ENCODE measurements at regions of chr17 and their contacts with region 1.

Region 1: DNA sequence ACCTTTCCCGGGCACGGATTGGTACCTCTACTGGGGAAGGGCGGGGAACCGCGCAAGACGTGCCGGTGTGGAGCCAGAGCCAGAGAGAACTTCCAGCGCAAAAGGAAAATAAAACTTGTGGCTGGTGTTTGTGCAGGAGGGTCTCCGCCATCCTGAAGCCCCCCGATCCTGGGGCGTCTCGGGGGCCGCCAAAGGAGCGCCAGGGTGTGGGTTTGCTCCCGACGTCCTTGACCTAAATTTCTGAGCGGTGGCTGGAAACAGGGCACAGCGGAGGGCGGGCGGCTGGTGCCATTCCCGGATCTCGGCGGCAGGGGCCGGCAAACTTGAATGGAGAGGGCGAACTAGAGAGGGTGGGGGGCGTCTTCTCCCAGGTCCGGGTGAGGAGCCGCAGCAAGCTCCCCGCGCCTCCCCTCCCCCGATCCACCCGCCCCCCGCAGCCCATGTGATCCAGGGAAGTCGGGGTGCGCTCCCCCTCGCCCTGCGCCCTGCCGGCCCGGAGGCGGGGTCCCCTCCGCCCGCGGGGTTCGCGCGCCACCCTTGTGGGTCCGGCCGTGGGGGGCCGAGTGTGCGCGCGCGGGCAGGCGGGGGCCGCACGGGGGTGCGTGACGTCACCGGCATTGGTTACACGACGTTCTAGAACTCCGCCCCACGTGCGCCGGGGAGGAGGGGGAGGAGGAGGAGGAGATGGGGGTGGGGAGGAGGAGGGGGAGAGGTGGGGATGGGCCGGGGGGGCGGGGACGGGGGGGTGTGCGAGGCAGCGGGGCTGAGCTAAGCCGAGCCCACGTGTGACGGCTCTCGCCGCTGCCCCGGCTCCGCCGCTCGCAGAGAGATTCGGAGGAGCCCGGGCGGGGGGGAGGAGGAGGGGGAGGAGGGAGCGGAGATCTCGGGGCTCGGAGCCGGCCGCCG is at the start of gene MSI2:
- DNase-seq: peak; percentile 99
- H3K4me3 ChIP-seq: peak within 1 kb of the TSS; percentile 90 to 98 (median 94)
- H3K27ac ChIP-seq: peak within 1 kb of the TSS; percentile 95 to 99 (median 97)
- H3K4me1 ChIP-seq: peaks cover 0 to 34% (median 19%) of the 10 kb centered on the region in 4 donors
- H3K27me3 ChIP-seq: no peaks in the 10 kb centered on the region
- CTCF ChIP-seq: no peak
- EP300 ChIP-seq: peak; percentile 31 to 86 (median 82)
- POLR2A ChIP-seq: peak in 1 of 2 donors; percentile 22
- total RNA-seq, gene MSI2: 19.5 to 25.8 (median 20.8) TPM

Region 2: DNA sequence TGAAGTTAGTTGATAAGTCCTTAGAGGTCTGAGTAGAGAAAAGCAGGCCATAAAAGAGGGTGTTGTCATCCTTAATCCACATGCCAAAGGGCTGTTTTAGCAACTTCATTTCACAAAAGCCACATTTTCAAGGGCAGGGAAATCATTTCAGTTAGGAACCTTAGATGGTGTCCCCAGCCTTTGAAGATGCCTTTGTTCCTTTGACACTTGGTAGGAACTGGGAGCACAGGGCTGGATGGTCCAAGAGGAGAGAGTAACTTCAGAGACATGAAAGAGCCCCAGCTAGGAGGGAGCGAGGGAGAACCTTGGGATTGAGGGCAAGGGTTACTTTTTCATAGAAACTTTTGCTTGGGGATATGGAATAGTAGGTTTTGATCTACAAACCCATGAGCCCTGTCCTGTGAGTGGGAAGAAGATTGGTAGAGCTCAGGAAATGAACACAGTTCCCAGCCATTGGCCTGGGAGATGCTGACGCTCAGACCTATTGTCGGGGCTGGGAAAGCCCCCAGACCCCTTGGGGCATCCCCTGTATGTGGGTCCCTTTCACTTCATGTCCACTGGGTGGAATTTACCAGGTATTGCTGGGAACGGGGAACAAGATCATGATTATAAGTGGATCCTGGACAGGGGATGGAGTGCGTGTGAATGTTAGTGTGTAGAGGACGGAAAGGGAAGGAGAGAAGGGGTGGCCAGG is 19.2 kb after region 1 on chr17:
- intact Hi-C with region 1: loop called (anchors 1 kb)
- DNase-seq: no peak
- H3K4me3 ChIP-seq: no peak overlapping the region
- H3K27ac ChIP-seq: no peak overlapping the region
- H3K4me1 ChIP-seq: no peaks in the 10 kb centered on the region
- H3K27me3 ChIP-seq: no peaks in the 10 kb centered on the region
- CTCF ChIP-seq: no peak
- EP300 ChIP-seq: no peak
- POLR2A ChIP-seq: no peak

Region 3: DNA sequence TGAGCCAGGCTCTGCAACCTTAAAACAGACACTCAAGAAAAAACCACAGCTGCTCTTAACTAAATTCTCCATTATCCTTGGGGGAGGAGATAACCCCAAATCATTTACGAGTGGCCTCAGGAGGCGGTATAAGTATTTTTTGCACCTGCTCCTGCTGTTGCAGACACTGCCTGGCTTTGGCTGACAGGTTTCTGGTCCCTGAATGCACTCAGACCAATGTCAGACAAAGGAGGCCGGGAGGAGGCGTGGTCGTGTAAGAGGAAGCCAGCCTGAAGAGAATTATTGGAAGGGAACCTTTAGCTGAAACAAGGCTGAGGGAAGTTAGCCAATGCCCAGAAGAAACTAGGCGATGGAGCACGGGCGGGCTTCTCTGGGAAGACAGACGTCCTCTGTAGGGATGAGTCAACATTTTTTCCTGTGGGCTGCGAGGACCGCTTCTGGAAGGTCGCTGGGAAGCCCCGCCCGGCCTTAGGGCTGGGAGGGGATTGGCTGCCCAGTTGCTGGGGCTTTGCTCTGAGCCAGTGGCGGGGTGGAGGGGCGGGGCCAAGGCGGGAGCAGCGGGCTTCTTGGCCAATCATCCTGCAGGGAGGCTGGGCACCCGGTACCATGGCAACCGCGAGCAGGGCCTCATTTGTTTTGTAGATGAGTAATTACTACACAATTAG is 406.7 kb after region 1 on chr17:
- intact Hi-C with region 1: loop called (anchors 2 kb)
- DNase-seq: peak; percentile 97
- H3K4me3 ChIP-seq: peak overlapping the region; percentile 14 to 36 (median 27)
- H3K27ac ChIP-seq: peak overlapping the region; percentile 65 to 94 (median 81)
- H3K4me1 ChIP-seq: peaks cover 0 to 21% (median 16%) of the 10 kb centered on the region in 4 donors
- H3K27me3 ChIP-seq: no peaks in the 10 kb centered on the region
- CTCF ChIP-seq: no peak
- EP300 ChIP-seq: no peak
- POLR2A ChIP-seq: no peak

Region 4: DNA sequence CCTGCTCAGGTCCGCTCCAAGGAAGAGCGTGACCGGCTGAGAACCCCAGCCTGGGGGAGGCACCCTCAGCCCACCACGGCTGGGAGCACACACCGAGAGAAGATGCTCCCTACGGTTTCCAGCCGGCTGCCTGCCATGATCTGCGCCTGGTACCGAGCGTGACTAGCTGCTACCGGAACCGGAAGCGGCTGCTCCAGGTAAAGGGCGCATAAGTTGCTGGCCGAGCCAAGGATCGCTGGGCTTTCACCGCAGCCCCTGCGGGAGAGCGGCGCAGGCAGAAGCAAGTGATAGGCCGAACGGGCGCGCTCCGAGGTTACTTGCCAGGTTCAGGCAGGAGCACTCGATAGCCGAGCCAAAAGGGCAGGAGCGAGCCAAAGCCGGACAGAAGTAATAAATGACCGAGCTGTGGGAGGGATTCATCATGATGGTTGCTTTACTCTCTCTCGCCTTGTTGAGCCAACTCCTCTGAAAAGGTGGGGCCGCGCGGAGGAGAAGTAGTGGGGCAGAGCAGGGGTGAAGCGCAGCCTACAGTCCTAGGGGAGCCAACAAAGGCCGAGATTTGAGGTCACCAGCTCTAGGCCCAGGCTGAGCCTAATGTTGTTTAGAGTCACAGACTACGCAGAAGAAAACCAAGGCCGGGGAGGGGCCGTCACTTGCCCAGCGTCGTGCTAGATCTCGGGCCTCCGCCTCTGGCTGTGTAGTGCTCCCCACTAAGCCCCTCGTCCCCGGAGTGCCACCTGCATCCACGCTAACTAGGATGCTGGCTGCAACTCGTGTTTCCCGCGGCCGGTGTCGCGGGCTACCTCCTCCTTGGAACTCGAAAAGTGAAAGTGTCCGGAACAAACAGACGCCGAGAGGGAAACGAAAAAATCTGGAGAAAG is 594.1 kb after region 1 on chr17 and contains the start of gene MRPS23:
- intact Hi-C with region 1: loop called (anchors 5 kb)
- DNase-seq: peak; percentile 100
- H3K4me3 ChIP-seq: peak within 1 kb of the TSS; percentile 63 to 97 (median 85)
- H3K27ac ChIP-seq: peak within 1 kb of the TSS; percentile 88 to 97 (median 94)
- H3K4me1 ChIP-seq: peaks cover 0 to 65% (median 55%) of the 10 kb centered on the region in 4 donors
- H3K27me3 ChIP-seq: no peaks in the 10 kb centered on the region
- CTCF ChIP-seq: no peak
- EP300 ChIP-seq: peak in 1 of 4 donors; percentile 79
- POLR2A ChIP-seq: peak; percentile 91 to 93
- total RNA-seq, gene MRPS23: 9.5 to 15.1 (median 13.3) TPM

Measured in sigmoid colon (tissue), 7 donors.